Thyroid gland (tissue), 4 donors: ENCODE measurements at regions of chr19 and their contacts with region 1.

Region 1: DNA sequence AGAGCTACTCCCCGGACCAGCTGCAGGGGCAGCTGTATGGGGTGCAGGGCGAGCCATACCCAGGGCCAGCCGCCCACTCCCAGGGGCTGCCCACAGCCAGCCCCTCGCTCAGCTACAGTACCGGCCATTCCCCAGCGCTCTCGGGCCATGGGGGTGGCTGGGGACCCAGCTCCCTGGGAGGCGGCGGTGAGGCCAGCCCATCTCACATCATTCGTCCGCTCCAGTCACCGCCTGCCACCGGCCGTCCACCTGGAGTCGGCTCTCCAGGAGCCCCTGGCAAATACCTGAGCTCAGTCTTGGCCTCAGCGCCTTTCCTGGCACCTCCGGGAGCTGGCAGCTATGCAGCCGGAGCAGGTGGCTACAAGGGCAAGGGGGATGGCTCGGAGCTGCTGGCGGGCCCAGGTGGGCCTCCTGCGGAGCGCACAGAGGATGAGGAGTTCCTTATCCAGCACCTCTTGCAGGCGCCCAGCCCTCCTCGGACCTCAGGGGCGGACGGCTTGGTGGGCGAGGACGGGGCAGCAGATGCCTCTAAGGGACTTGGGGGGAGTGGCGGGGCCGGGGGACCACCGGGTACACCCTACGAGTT is 4.9 kb downstream of the PRR12 start:
- DNase-seq: no peak
- H3K4me3 ChIP-seq: no peak overlapping the region
- H3K27ac ChIP-seq: no peak overlapping the region
- H3K4me1 ChIP-seq: peaks cover 12 to 14% of the 10 kb centered on the region in 2 donors
- H3K27me3 ChIP-seq: no peaks in the 10 kb centered on the region
- CTCF ChIP-seq: no peak
- POLR2A ChIP-seq: no peak

Region 2: GRCh38 chr19:49347846-49348245 is 248.1 kb before region 1 on chr19:
- intact Hi-C with region 1: no loop called
- DNase-seq: no peak
- H3K4me3 ChIP-seq: no peak overlapping the region
- H3K27ac ChIP-seq: no peak overlapping the region
- H3K4me1 ChIP-seq: no peaks in the 10 kb centered on the region
- H3K27me3 ChIP-seq: no peaks in the 10 kb centered on the region
- CTCF ChIP-seq: no peak
- POLR2A ChIP-seq: no peak

Region 3: GRCh38 chr19:49421039-49421877 is 174.7 kb before region 1 on chr19:
- intact Hi-C with region 1: no loop called
- DNase-seq: peak; percentile 76 to 78
- H3K4me3 ChIP-seq: no peak overlapping the region
- H3K27ac ChIP-seq: no peak overlapping the region
- H3K4me1 ChIP-seq: peaks cover 0 to 23% of the 10 kb centered on the region in 2 donors
- H3K27me3 ChIP-seq: peaks cover 31% of the 10 kb centered on the region
- CTCF ChIP-seq: no peak
- POLR2A ChIP-seq: no peak

Region 4: GRCh38 chr19:49637821-49638738 is 42.2 kb after region 1 on chr19:
- intact Hi-C with region 1: loop called (anchors 5 kb)
- DNase-seq: peak; percentile 38 to 47
- H3K4me3 ChIP-seq: peak overlapping the region in 1 of 3 donors; percentile 75
- H3K27ac ChIP-seq: peak overlapping the region; percentile 62 to 96 (median 71)
- H3K4me1 ChIP-seq: peaks cover 21 to 46% of the 10 kb centered on the region in 2 donors
- H3K27me3 ChIP-seq: no peaks in the 10 kb centered on the region
- CTCF ChIP-seq: no peak
- POLR2A ChIP-seq: no peak